Activated CD8-positive, alpha-beta T cell treated with anti-CD3 and anti-CD28 coated beads, Interleukin-2, amount 10 ng/mL, durations not matched to agents 7 days and 5 days (primary cell): ENCODE measurements at regions of chr21 and their contacts with region 1.

Region 1: DNA sequence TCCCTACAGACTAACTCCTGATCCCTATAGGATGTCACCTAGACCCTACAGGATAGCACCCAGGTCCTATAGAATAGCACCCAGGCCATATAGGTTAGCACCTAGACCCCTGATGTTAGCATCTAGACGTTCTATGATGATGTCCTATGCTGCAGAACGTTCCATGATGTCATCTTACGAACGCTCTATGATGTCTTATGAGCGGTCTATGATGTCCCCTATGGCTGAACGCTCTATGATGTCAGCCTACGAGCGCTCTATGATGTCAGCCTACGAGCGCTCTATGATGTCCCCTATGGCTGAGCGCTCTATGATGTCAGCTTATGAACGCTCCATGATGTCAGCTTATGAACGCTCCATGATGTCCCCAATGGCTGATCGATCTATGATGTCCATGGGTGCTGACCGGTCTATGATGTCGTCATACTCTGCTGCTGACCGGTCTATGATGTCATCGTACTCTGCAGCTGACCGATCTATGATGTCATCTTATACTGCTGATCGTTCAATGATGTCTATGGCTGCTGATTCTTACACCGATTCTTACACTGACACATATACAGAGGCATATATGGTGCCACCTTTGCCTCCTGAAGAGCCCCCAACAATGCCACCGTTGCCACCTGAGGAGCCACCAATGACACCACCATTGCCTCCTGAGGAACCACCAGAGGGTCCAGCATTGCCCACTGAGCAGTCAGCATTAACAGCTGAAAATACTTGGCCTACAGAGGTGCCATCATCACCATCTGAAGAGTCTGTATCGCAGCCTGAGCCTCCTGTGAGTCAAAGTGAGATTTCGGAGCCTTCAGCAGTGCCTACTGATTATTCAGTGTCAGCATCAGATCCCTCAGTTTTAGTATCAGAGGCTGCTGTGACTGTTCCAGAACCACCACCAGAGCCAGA is 9.5 kb downstream of the SON start:
- DNase-seq: no peak
- ATAC-seq: no peak
- H3K4me3 Mint-ChIP-seq: no peak overlapping the region
- H3K27ac Mint-ChIP-seq: no peak overlapping the region
- H3K4me1 Mint-ChIP-seq: peaks cover 40% of the 10 kb centered on the region
- H3K27me3 Mint-ChIP-seq: no peaks in the 10 kb centered on the region

Region 2: GRCh38 chr21:32844653-32845436 is 707.5 kb before region 1 on chr21:
- CTCF ChIA-PET with region 1: no interaction called
- POLR2A ChIA-PET with region 1: no interaction called
- DNase-seq: no peak
- ATAC-seq: no peak
- H3K4me3 Mint-ChIP-seq: no peak overlapping the region
- H3K27ac Mint-ChIP-seq: no peak overlapping the region
- H3K4me1 Mint-ChIP-seq: no peaks in the 10 kb centered on the region
- H3K27me3 Mint-ChIP-seq: peaks cover 18% of the 10 kb centered on the region

Region 3: DNA sequence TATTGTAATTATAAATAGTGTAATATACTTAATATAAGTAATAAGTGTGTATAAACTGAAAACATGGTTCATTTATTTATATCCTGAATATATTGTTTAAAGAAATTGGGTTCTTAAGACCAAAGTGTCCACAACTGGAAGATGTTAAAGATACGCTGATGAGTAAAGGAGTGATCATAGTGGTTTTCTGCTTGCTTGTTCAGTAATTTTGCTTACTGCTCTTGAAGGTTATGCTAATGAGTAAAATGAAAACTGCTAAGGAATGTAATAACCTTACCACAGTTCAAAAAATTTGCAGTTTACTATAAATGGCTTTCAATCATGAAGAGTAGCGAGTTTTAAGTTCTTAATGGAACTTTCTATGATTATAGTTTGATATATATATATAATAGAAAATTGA is 14.2 kb after region 1 on chr21:
- CTCF ChIA-PET with region 1: interaction called, 22 read pairs
- POLR2A ChIA-PET with region 1: interaction called, 3 read pairs
- DNase-seq: no peak
- ATAC-seq: no peak
- H3K4me3 Mint-ChIP-seq: no peak overlapping the region
- H3K27ac Mint-ChIP-seq: no peak overlapping the region
- H3K4me1 Mint-ChIP-seq: peaks cover under 1% of the 10 kb centered on the region
- H3K27me3 Mint-ChIP-seq: no peaks in the 10 kb centered on the region